ENCODE measurements at regions of chr15 and their contacts with region 1.

Region 1: DNA sequence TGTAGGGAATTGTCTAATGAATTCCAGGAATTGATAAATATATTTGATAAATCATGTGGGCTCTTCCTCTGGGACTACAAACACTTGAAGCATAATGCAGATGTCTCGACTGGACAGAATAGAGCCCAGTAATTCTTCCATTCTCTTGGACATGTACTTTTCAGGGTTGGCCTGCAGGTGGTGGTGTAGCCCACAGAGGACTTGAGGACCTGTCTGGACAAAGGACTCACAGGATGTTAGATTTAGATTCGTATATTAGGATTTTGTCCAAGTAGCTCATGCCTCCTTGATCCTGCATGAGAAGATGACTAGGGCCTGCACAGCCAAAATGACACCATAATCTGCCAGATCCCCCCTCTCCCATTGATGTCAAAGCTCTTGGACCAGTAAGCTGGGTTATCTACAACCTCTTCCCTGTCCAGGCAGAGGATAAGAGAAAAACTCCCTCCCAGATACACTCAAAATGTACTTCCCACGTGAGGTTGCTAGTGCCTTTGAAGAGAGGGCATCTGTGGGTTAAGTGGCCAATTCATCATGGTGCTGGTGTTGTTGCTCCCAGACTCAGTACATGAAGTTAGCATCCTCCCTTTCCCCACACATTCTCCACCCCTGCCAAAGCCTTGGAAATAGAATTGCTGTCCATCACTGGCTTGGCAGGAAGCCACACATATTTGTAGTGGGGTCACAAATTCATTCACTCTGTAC is 88.6 kb upstream of the ZNF280D start:
- DNase-seq: peak in 4 of 5 donors; percentile 47 to 61 (median 52)
- ATAC-seq: peak; percentile 69 to 87 (median 85)
- H3K4me3 ChIP-seq: no peak overlapping the region
- H3K27ac ChIP-seq: no peak overlapping the region
- H3K4me1 ChIP-seq: peaks cover 0 to 21% (median 10%) of the 10 kb centered on the region in 12 donors
- H3K27me3 ChIP-seq: no peaks in the 10 kb centered on the region
- CTCF ChIP-seq: peak; percentile 55 to 74 (median 66)
- POLR2A ChIP-seq: no peak

Region 2: GRCh38 chr15:56440214-56440770 is 381.6 kb before region 1 on chr15:
- intact Hi-C with region 1: no loop called
- DNase-seq: no peak
- ATAC-seq: no peak
- H3K4me3 ChIP-seq: no peak overlapping the region
- H3K27ac ChIP-seq: no peak overlapping the region
- H3K4me1 ChIP-seq: no peaks in the 10 kb centered on the region
- H3K27me3 ChIP-seq: no peaks in the 10 kb centered on the region
- CTCF ChIP-seq: no peak
- POLR2A ChIP-seq: no peak

Region 3: DNA sequence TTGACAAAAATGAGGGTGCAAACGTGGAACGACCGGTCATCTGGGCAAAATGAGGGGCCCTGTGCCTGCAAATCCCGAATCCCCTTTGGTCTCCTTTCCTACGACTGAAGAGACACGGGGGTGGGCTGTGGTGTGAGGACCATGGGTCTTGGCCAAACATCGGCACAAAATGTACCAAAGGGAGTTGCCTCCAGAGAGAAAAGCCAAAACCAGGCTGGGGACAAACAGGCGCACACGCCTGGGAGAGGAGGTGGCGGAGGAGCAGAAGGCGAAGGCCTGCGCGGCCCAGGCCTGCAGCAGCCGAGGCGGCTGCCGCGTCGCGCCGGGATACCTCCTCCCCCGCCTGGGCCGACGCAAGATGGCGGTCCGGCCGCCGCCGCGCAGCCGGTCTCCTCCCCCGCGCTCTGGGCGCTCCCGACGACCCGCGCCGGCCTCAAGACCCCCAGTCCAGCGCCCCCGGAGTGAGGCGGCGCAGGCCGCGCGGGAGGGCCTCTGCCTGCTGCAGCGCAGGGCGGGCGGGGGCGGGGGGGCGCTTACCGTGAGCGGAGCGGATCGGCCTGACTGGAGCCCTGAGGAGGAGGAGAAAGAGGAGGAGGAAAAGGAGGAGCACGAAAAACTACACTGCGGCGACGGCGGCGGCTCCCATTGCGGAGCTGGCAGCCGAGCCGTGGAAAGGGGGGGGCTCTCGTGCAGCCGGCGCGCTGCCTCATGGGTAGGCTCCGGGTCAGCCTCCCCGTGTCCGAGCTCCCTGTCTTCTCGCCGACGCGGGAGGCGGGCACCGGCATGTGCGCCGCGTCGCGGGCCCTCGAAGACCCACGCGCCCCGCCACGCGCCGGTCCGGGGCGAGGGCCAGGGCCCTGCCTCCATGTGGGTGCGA is 88.7 kb before region 1 on chr15 and contains the start of gene ZNF280D:
- intact Hi-C with region 1: loop called in 1 of 10 experiments (anchors 10 kb)
- DNase-seq: peak; percentile 93 to 96 (median 94)
- ATAC-seq: peak; percentile 85 to 97 (median 96)
- H3K4me3 ChIP-seq: peak within 1 kb of the TSS; percentile 61 to 88 (median 76)
- H3K27ac ChIP-seq: peak within 1 kb of the TSS; percentile 96 to 99 (median 98)
- H3K4me1 ChIP-seq: peaks cover 0 to 48% (median 39%) of the 10 kb centered on the region in 12 donors
- H3K27me3 ChIP-seq: no peaks in the 10 kb centered on the region
- CTCF ChIP-seq: peak in 1 of 12 donors; percentile 7
- POLR2A ChIP-seq: peak in 1 of 2 donors; percentile 61
- total RNA-seq, gene ZNF280D: 14.6 to 32.8 (median 23.9) TPM

Region 4: GRCh38 chr15:56918046-56918938 is 96.4 kb after region 1 on chr15 and contains the start of gene TCF12:
- intact Hi-C with region 1: loop called in 1 of 10 experiments (anchors 5 kb)
- DNase-seq: peak; percentile 96 to 97 (median 97)
- ATAC-seq: peak; percentile 94 to 98 (median 97)
- H3K4me3 ChIP-seq: peak within 1 kb of the TSS; percentile 67 to 97 (median 91)
- H3K27ac ChIP-seq: peak within 1 kb of the TSS; percentile 78 to 98 (median 96)
- H3K4me1 ChIP-seq: peaks cover 2 to 61% (median 50%) of the 10 kb centered on the region in 12 donors
- H3K27me3 ChIP-seq: no peaks in the 10 kb centered on the region
- CTCF ChIP-seq: peak in 11 of 12 donors; percentile 15 to 64 (median 41)
- POLR2A ChIP-seq: peak in 1 of 2 donors; percentile 85
- total RNA-seq, gene TCF12: 31.8 to 77.3 (median 46.8) TPM

Region 5: DNA sequence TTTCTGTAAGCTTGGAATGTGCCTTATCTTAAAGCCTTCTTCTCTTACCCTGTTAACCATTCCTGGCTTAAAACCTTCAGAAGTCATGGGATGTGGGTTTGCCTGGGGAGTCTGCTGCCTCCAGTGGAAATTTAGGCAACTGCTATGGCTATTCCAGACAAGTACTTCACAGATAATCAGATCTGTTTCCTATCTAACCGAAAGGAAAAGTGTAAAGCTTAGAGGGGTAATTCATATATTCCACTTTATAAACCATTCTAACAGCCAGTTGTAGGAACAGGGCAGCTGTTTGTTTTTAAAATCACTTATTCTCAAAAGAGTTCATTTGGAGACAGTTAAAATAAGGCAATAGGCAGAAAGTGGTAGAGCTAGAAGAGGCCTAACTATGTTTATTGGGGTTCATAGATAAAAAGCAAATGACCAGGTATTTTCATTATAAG is 316.5 kb after region 1 on chr15:
- intact Hi-C with region 1: loop called in 5 of 10 experiments (anchors 5 to 10 kb)
- DNase-seq: peak in 1 of 5 donors; percentile 31
- ATAC-seq: peak; percentile 53 to 82 (median 78)
- H3K4me3 ChIP-seq: no peak overlapping the region
- H3K27ac ChIP-seq: no peak overlapping the region
- H3K4me1 ChIP-seq: peaks cover 0 to 56% (median 41%) of the 10 kb centered on the region in 12 donors
- H3K27me3 ChIP-seq: no peaks in the 10 kb centered on the region
- CTCF ChIP-seq: peak; percentile 60 to 86 (median 78)
- POLR2A ChIP-seq: no peak

Region 6: GRCh38 chr15:57205996-57206395 is 384.1 kb after region 1 on chr15:
- intact Hi-C with region 1: loop called in 9 of 10 experiments (anchors 5 to 10 kb)
- DNase-seq: no peak
- ATAC-seq: no peak
- H3K4me3 ChIP-seq: no peak overlapping the region
- H3K27ac ChIP-seq: no peak overlapping the region
- H3K4me1 ChIP-seq: peaks cover 0 to 19% (median 5%) of the 10 kb centered on the region in 12 donors
- H3K27me3 ChIP-seq: no peaks in the 10 kb centered on the region
- CTCF ChIP-seq: no peak
- POLR2A ChIP-seq: no peak

Region 7: DNA sequence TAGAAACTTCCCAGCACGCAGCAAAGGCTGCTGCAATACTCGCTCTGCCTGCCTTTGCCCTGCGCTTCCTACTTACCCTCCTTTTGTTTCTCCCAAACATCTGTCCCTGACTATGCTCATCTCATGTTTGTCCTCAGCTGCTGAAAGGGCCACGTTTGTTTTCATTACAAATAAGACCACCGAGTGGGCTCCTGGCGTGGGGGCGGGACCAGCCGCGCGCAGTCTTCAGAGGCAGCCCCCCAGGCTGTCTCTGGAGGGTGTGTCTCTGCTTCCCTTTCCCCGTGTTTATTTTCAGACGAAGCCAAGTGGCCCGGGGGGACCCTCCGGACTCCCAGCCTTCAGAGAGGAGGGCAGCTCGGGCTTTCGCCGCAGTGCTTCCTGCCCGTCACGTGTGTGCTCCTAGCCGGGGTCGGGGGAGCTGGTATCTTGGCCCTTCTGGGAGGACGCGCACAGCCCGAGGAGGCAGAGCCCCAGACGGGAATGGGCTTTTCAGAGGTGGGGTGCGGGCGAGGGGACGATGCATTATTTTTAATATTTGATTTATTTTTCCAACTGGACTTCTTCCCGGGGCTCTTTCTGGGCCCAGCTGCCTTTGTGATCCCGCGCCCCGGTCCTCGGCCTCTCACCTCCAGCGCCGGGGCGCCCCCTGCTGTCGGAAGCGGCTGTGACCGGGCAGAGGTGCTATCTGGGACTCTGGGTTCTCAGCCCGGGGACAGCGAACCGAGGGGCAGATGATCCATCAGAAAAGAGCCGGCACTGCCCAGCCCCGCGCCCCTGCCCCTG is 484.5 kb after region 1 on chr15:
- intact Hi-C with region 1: loop called in 7 of 10 experiments (anchors 2 to 10 kb)
- DNase-seq: peak; percentile 86 to 94 (median 87)
- ATAC-seq: peak; percentile 64 to 92 (median 88)
- H3K4me3 ChIP-seq: peak overlapping the region; percentile 33 to 84 (median 63)
- H3K27ac ChIP-seq: peak overlapping the region in 7 of 12 donors; percentile 4 to 63 (median 30)
- H3K4me1 ChIP-seq: peaks cover 0 to 17% (median 8%) of the 10 kb centered on the region in 12 donors
- H3K27me3 ChIP-seq: no peaks in the 10 kb centered on the region
- CTCF ChIP-seq: peak; percentile 86 to 94 (median 90)
- POLR2A ChIP-seq: no peak

Measured in heart left ventricle (tissue), 16 donors.